ENCODE measurements at regions of chr2 and their contacts with region 1.

Region 1: GRCh38 chr2:120312861-120313694 is 32.9 kb upstream of the INHBB start:
- DNase-seq: peak; percentile 80 to 88
- ATAC-seq: peak; percentile 80 to 93 (median 89)
- H3K4me3 ChIP-seq: peak overlapping the region; percentile 60
- H3K27ac ChIP-seq: peak overlapping the region; percentile 11
- H3K4me1 ChIP-seq: peaks cover 7% of the 10 kb centered on the region
- H3K27me3 ChIP-seq: no peaks in the 10 kb centered on the region
- CTCF ChIP-seq: peak; percentile 82

Region 2: DNA sequence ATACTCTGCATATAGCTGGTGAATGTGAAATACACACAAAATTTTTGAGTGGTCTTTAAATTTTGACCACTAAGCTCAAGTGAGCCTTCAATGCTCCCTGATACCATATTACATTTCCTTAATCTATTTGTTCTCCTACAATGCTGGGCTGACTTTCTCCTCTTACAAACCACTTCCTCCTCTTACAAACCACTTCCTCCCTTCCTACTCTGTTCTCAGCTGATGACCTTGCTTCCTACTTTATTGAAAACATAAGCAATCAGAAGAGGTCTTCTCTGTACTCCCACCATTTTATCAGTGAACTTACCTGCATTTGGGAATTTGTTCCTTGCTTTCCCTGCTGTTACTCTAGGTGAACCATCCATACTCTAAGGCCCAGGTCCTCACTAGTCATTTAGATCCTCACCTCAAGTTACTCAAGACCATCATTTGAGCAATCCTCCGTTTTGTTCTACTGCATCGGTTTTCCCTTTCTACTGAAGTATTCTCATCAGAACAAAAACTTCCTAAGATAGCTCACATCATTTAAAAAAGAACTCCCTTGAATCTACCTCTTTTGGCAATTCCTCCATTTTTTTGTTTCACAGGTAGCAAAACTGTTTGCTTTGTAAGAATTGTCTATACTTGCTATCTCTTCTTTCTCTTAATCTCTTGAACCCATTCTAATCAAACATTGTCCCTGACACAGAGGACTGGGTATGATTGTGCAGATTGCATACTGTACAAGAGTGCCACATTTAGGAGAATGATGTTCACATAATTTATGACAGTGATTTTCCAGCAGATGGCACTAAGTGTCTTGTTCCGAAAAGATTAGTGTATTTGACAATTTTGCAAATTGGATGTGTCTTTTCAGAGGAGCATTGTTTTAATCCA is 203.7 kb before region 1 on chr2:
- intact Hi-C with region 1: loop called in 1 of 2 experiments (anchors 10 kb)
- DNase-seq: no peak
- ATAC-seq: peak; percentile 44 to 66 (median 56)
- H3K4me3 ChIP-seq: no peak overlapping the region
- H3K27ac ChIP-seq: no peak overlapping the region
- H3K4me1 ChIP-seq: peaks cover 23% of the 10 kb centered on the region
- H3K27me3 ChIP-seq: no peaks in the 10 kb centered on the region
- CTCF ChIP-seq: peak; percentile 41

Region 3: GRCh38 chr2:120208381-120209353 is 104.4 kb before region 1 on chr2:
- intact Hi-C with region 1: loop called in 1 of 2 experiments (anchors 1 kb)
- DNase-seq: no peak
- ATAC-seq: no peak
- H3K4me3 ChIP-seq: no peak overlapping the region
- H3K27ac ChIP-seq: no peak overlapping the region
- H3K4me1 ChIP-seq: peaks cover 5% of the 10 kb centered on the region
- H3K27me3 ChIP-seq: no peaks in the 10 kb centered on the region
- CTCF ChIP-seq: no peak

Region 4: DNA sequence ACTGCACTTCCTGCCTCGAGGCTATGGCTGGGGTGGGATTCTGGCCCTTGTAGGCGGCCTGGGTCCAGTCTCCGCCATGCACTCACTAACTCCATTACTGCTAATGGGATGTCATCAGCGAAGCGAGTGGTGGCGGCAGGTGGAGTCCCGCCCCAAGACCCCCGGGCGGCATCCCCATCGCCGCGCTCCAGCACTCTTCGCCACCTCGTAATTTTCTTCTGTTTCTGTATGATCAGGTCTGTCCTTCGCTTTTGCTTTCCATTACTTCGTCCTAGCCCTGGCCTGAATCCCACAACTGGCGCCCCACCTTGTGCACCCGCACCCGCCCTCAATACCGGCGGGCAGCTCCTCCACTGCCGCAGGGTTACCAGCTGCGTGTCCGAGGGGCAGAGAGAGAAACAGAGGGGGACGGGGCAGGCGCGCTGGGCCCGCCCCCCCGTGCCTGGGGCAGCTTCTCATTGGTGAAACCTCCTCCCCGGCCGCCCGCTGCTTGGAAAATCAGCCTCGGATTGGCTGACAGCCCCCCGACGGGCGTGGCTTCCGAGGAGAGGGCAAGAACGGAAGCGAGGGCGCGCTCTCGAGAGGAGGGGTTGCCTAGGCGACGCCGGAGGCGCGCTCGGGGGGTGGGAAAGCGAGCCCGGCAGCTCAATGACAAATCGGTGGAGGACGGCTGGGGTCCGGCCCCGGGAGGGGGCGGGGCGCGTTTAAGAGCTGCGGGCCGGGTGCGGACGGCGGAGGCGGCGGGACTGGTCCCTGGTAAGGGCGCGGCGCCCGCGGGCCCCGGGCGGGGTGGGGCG is 60.7 kb before region 1 on chr2 and contains the start of gene RALB:
- intact Hi-C with region 1: loop called in 1 of 2 experiments (anchors 5 kb)
- DNase-seq: peak; percentile 100
- ATAC-seq: peak; percentile 95 to 98 (median 96)
- H3K4me3 ChIP-seq: peak within 1 kb of the TSS; percentile 79
- H3K27ac ChIP-seq: peak within 1 kb of the TSS; percentile 87
- H3K4me1 ChIP-seq: peaks cover 15% of the 10 kb centered on the region
- H3K27me3 ChIP-seq: no peaks in the 10 kb centered on the region
- CTCF ChIP-seq: no peak
- total RNA-seq, gene RALB: 25.6 to 38.1 (median 33.6) TPM

Region 5: GRCh38 chr2:120486441-120487378 is 173.6 kb after region 1 on chr2:
- intact Hi-C with region 1: no loop called
- DNase-seq: peak; percentile 43 to 49
- ATAC-seq: peak; percentile 90 to 96 (median 93)
- H3K4me3 ChIP-seq: no peak overlapping the region
- H3K27ac ChIP-seq: peak overlapping the region; percentile 50
- H3K4me1 ChIP-seq: no peaks in the 10 kb centered on the region
- H3K27me3 ChIP-seq: no peaks in the 10 kb centered on the region
- CTCF ChIP-seq: no peak